KBM-7 (cell line): ENCODE measurements at regions of chr2 and their contacts with region 1.

Region 1: GRCh38 chr2:7118606-7119503 is 201.6 kb downstream of the RNF144A start:
- DNase-seq: peak; percentile 32

Region 2: GRCh38 chr2:6626401-6627012 is 492.3 kb before region 1 on chr2:
- in situ Hi-C with region 1: no loop called
- DNase-seq: no peak

Region 3: DNA sequence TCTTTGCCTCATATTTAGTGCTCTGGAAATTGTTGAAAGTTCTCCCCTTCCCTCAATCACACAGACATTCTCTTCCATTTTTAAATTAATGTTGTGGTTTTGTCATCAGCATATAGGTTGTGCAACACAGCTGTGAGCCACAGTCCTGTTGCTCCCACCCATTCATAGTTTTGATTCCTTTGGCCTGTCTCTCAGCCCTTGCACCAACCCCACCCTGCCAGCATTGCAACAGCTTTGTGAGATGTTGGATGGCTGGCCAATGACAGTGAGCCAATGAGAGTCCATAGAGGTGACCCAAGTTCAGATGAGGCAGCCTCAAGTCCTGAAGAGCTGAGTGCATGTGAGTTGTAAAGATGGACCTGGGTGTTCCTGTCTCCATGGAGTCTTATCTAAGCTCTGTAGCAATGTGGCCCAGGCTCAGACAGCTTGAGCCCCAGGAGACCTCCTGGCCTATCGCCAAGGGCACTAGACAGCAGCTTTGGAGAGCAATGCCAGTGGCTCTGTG is 573.9 kb after region 1 on chr2:
- in situ Hi-C with region 1: loop called (anchors 25 kb)
- DNase-seq: no peak

Region 4: GRCh38 chr2:8719528-8719927 is 1600.7 kb after region 1 on chr2:
- in situ Hi-C with region 1: loop called (anchors 25 kb)
- DNase-seq: no peak